ENCODE measurements at regions of chr5 and their contacts with region 1.

Region 1: DNA sequence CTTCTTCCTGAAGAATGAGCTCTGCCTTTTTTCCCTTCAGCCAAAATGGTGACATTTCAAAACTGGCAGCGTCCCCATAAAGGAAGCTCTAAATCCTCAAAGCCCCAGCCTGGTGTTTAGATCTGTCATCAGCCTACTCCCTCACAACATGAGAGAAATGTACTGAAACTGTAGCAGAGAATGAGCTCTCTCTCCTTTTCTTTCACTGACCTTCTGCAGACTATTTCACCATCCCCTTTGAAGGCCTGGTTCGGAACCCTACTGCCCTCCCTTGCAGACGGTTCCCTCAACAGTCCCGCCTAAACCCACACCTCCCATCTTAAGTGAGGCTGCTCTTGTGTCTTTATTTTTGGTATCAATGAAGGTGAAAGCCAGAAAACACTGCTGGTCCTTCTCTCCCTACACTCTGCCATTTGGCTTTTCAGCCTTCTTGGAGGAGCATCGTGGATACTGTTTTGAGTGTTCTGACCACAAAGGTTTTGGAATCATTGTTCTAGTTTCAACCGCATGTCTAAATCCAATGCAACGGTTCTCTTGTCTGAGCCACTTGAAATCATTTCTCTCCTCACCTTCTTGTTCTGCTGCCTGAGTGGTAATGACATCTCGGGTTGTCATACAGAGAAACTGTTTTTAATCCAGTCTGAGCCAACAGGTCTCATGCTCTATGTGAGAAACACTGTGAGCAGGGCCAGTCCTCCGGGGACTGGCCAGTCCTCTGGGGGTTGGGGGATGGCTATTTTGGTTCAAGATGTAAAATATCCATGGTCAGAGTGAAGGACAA is 39.0 kb downstream of the ITK start:
- DNase-seq: no peak
- H3K4me3 Mint-ChIP-seq: peak overlapping the region; percentile 40
- H3K27ac Mint-ChIP-seq: peak overlapping the region; percentile 94
- H3K4me1 Mint-ChIP-seq: peaks cover 79% of the 10 kb centered on the region
- H3K27me3 Mint-ChIP-seq: no peaks in the 10 kb centered on the region

Region 2: GRCh38 chr5:157167214-157167621 is 52.5 kb before region 1 on chr5:
- intact Hi-C with region 1: loop called (anchors 1 kb)
- DNase-seq: peak; percentile 9
- H3K4me3 Mint-ChIP-seq: peak overlapping the region; percentile 43
- H3K27ac Mint-ChIP-seq: peak overlapping the region; percentile 86
- H3K4me1 Mint-ChIP-seq: peaks cover 75% of the 10 kb centered on the region
- H3K27me3 Mint-ChIP-seq: no peaks in the 10 kb centered on the region

Region 3: DNA sequence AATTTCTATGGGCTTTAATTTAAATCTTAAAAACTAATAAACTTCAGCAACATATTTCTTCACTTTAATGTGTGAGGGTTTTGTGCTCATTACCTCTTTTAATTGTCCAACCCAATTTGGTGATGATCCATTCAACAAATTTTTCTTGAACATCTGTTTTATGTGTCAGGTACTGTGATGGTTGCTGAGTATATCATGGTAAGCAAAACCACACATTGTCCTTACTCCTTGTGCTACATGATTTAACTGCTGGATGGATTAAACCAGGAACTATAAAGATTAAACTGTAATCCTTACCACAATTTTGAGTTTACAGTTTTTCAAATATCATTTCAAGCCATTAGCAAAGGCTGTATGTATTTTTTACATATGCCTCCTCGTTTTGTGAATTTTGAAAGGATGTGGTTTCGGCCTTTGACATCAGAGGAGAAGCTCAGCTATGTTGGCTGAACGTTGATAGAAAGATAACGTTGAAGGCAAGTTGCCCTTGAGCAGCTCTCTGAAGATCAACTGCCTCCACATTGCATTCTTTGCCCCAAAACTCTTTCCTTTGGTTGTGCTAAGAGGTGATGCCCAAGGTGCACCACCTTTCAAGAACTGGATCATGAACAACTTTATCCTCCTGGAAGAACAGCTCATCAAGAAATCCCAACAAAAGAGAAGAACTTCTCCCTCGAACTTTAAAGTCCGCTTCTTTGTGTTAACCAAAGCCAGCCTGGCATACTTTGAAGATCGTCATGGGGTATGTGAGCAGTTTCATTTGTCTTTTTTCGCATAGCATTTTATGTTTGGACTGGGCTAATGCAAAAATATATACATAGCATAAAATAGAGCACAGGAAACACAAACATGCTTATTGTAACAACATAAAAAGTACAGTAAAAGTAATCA is 39.1 kb before region 1 on chr5 and contains the start of gene ITK:
- intact Hi-C with region 1: loop called (anchors 1 kb)
- DNase-seq: peak; percentile 53
- H3K4me3 Mint-ChIP-seq: peak within 1 kb of the TSS; percentile 99
- H3K27ac Mint-ChIP-seq: peak within 1 kb of the TSS; percentile 98
- H3K4me1 Mint-ChIP-seq: peaks cover 44% of the 10 kb centered on the region
- H3K27me3 Mint-ChIP-seq: no peaks in the 10 kb centered on the region
- total RNA-seq, gene ITK: 313 and 319 TPM in 2 replicates

Region 4: DNA sequence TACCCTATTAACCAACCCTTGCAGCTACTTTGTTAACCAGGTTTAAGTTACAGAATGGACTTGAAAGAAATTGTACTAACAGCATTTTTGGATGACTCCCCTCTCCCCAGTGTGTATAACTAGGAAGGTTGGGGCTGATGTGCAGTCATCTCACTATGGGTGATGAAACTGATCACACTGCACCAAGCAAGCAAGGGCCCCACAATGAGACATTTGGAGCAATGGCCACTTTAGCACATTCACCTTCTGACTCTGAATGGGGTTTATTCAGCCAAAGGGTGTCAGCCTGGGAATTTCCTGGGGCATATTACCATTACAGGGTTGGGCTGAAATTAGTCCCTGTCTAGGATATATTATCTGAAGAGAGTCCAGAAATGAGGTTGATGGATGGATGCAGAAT is 27.6 kb after region 1 on chr5:
- intact Hi-C with region 1: loop called (anchors 1 kb)
- DNase-seq: no peak
- H3K4me3 Mint-ChIP-seq: peak overlapping the region; percentile 26
- H3K27ac Mint-ChIP-seq: peak overlapping the region; percentile 85
- H3K4me1 Mint-ChIP-seq: peaks cover 75% of the 10 kb centered on the region
- H3K27me3 Mint-ChIP-seq: no peaks in the 10 kb centered on the region

Region 5: DNA sequence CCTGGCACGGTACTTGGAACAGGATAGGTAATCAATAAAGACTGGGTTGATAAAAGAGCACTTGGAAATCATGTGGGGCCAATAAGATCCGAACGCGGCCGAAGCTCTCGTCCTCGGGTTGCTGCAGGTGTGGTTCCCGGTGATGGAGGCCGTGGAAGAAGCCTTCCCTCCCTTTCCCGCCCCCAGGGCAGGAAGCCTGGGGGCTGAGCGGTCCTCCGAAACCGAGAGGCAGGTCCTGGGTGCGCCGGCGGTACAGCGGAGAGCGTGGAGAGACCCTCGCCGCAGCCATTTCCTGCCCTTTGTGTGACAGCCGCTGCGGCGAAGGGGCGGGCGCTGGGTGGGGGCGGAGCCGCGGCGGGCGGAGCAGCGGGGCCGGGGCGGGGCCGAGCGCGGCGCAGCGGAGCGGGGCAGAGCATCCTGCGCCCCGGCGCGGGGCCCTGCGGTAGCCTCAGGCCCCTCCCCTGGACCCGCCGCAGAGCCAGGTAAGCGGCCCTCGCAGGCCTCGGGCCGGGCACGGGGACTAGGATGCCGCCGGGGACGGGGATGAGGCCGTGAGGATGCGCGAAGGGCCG is 46.1 kb after region 1 on chr5 and contains the start of gene CYFIP2:
- intact Hi-C with region 1: loop called (anchors 5 kb)
- DNase-seq: peak; percentile 84
- H3K4me3 Mint-ChIP-seq: peak within 1 kb of the TSS; percentile 89
- H3K27ac Mint-ChIP-seq: peak within 1 kb of the TSS; percentile 95
- H3K4me1 Mint-ChIP-seq: peaks cover 65% of the 10 kb centered on the region
- H3K27me3 Mint-ChIP-seq: no peaks in the 10 kb centered on the region
- total RNA-seq, gene CYFIP2: 171 and 182 TPM in 2 replicates